ENCODE measurements at regions of chr3 and their contacts with region 1.

Region 1: DNA sequence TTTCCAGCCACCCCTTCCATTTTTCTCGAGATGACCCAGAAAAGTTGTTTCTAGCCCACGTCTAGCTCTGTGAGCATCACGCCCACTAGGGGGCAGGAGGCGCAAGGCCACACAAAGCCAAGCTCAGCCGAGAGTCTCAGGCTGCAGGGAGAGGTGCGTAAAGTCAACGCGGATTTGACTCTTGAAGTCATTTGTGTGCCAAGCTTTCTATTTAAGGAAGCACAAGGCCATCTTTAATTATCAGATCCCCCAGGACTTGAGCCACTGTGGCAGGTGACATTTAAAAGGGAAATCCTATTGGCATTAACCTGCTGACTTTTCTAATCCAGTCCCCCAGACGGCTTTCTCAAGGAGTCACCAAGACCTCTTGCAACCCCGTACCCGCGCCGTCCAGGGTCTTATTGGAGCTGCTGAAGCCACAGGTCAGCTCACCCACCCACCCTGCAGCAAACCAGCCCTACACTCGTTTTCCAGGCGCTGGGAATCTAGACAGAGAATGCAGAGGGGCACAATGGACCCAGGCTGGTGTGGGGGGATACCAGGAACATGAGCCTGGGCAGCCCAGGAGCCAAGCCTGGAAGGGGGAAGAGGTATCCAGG is 62.1 kb downstream of the CAPN7 start:
- DNase-seq: peak; percentile 74
- H3K4me3 Mint-ChIP-seq: no peak overlapping the region
- H3K27ac Mint-ChIP-seq: no peak overlapping the region
- H3K4me1 Mint-ChIP-seq: peaks cover 73% of the 10 kb centered on the region
- H3K27me3 Mint-ChIP-seq: no peaks in the 10 kb centered on the region

Region 2: DNA sequence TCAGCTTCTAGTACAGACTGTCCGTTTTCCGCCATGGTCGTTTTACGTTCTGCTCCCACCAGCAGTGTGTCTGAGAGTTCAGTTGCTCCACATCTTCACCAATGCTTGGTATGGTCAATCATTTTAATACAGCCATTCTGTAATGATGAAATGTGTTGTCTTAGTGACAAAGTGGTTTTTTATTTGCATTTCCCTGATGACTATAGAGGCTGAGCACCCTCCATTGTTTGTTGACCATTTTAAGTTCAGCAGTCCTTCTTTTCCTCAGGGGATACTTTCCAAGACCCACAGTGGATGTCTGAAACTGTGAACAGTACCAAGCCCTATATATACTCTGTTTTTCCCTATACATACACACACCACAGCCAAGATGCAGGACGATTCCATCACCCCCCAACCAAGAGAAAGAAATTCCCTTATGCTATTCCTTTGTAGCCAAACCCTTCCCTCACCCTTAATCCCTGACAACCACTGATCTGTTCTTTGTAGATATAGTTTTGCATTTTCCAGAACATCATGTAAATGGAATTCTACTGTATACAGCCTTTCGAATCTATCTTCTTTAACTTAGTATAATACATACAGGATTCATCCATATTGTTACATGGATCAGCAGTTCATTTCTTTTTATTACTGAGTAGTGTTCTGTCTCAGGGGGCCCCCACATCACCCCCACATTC is 537.3 kb before region 1 on chr3:
- intact Hi-C with region 1: no loop called
- DNase-seq: no peak
- H3K4me3 Mint-ChIP-seq: no peak overlapping the region
- H3K27ac Mint-ChIP-seq: no peak overlapping the region
- H3K4me1 Mint-ChIP-seq: no peaks in the 10 kb centered on the region
- H3K27me3 Mint-ChIP-seq: peaks cover 1% of the 10 kb centered on the region

Region 3: DNA sequence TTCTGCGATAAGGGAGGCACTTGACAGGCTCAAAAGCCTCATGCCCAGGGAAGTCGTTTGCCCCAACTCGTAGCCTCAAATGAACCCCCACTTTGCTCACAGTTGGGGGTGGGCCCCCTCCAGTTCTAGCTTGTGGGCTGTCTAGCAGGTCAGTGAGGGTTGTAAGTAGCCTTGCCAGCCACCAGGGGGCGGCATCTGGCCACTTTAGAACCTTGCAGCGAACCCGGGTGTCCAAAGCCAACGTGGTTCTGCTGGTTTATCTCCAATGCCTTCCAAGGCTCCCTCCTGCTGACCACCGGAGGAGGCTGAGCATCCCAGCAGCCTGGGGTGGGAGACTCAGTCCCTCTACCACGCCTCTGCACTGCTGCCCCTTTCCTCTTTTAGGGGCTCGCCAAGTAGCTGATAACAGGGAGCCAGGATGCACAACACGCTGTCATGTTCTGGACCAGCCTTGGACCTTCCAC is 160.0 kb before region 1 on chr3:
- intact Hi-C with region 1: loop called (anchors 10 kb)
- DNase-seq: peak; percentile 55
- H3K4me3 Mint-ChIP-seq: no peak overlapping the region
- H3K27ac Mint-ChIP-seq: no peak overlapping the region
- H3K4me1 Mint-ChIP-seq: peaks cover 4% of the 10 kb centered on the region
- H3K27me3 Mint-ChIP-seq: peaks cover 11% of the 10 kb centered on the region

Region 4: DNA sequence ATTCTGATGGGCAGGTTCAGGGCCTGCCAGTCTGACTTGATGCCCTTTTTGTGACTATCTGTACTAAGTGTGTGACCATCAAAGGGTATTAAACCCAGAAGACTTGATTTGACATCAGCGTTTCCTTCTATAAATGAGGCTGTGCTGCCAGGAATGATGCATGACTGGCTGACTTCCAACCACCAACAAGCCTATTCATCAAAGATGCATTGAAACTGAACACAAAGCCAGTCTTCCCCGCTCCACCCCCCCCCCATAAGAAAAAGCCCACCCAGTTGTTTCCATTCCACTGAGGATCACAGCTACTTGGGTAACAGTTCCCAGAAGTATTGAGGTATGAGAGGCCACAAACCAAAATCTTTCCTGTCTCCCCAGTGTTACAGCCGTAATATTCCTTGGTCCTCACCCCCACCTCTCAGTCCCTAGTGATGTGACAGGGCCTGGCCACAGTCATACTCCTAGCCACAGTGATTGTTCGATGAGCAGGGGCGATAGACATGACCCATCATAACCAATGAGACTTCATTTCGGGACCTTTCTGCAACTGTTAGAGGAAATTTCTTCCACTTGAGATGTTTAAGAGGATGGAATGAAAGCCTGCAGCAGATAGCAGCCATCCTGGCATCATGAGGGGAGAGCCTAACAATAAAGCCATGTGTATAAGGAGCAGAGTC is 41.7 kb after region 1 on chr3:
- intact Hi-C with region 1: loop called (anchors 1 kb)
- DNase-seq: no peak
- H3K4me3 Mint-ChIP-seq: peak overlapping the region; percentile 66
- H3K27ac Mint-ChIP-seq: peak overlapping the region; percentile 94
- H3K4me1 Mint-ChIP-seq: peaks cover 66% of the 10 kb centered on the region
- H3K27me3 Mint-ChIP-seq: no peaks in the 10 kb centered on the region

Region 5: DNA sequence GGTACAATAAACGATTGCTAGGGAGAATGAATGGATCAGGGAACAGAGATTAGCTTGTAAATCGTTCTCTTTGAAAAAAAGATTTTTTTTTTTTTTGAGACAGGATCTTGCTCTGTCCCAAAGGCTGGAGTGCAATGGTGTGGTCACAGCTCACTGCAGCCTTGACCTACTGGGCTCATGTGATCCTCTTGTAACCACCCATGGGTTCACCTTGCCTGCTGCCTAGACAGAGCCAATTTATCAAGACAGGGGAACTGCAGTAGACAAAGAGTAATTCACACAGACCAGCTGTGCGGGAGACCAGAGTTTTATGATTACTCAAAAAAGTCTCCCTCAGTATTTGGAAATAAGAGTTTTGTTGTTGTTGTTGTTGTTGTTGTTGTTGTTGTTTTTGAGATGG is 119.6 kb after region 1 on chr3:
- intact Hi-C with region 1: no loop called
- DNase-seq: no peak
- H3K4me3 Mint-ChIP-seq: no peak overlapping the region
- H3K27ac Mint-ChIP-seq: no peak overlapping the region
- H3K4me1 Mint-ChIP-seq: no peaks in the 10 kb centered on the region
- H3K27me3 Mint-ChIP-seq: peaks cover 1% of the 10 kb centered on the region

Region 6: DNA sequence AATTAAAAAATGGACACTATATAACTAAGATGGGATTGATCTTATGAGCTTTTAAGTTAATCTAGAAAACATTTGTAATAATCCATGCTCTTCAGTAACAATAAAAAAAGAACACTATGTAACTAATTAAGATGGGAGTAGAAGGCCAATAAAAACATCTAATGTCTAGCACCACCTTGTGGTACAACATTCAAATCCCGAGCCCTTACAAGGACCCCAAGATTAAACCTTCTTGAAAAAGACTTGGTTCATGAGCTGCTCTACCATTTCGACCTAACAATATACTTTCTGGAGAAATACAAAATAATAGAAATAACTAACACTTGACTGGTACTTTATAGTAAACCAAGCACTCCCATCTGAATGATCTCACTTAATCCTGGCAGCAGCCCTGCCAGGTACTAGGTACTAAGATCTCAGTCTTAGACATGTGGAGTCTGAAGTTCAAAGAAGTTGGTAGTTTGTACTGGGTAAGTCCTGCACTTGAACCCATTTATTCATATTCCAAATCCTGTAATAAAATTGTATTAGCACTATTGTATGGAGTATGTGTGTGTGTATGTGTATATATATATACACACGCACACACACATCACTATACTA is 137.4 kb after region 1 on chr3:
- intact Hi-C with region 1: loop called (anchors 1 kb)
- DNase-seq: no peak
- H3K4me3 Mint-ChIP-seq: no peak overlapping the region
- H3K27ac Mint-ChIP-seq: no peak overlapping the region
- H3K4me1 Mint-ChIP-seq: peaks cover 6% of the 10 kb centered on the region
- H3K27me3 Mint-ChIP-seq: no peaks in the 10 kb centered on the region

Region 7: GRCh38 chr3:15535732-15536131 is 267.6 kb after region 1 on chr3:
- intact Hi-C with region 1: loop called (anchors 5 kb)
- DNase-seq: peak; percentile 32
- H3K4me3 Mint-ChIP-seq: peak overlapping the region; percentile 60
- H3K27ac Mint-ChIP-seq: peak overlapping the region; percentile 75
- H3K4me1 Mint-ChIP-seq: peaks cover 55% of the 10 kb centered on the region
- H3K27me3 Mint-ChIP-seq: no peaks in the 10 kb centered on the region

Measured in activated T-helper 1 cell treated with anti-CD3 and anti-CD28 coated beads, Interleukin-12 subunit alpha, Interleukin-12 subunit beta, Interleukin-2, Interleukin-4 antibody, amounts not matched to agents 30 ng/mL and 10 ng/mL and 1 ng/mL, durations not matched to agents 14 hours and 24 hours and 36 hours (primary cell).